ENCODE measurements at regions of chr3 and their contacts with region 1.

Region 1: GRCh38 chr3:187319699-187320302 is 28.3 kb upstream of the MASP1 start:
- DNase-seq: peak; percentile 57 to 74 (median 63)
- ATAC-seq: peak; percentile 68
- H3K4me3 ChIP-seq: no peak overlapping the region
- H3K27ac ChIP-seq: no peak overlapping the region
- H3K4me1 ChIP-seq: peaks cover 7% of the 10 kb centered on the region
- H3K27me3 ChIP-seq: no peaks in the 10 kb centered on the region
- CTCF ChIP-seq: peak; percentile 13 to 82 (median 64)
- POLR2A ChIP-seq: no peak

Region 2: GRCh38 chr3:187215460-187215859 is 104.3 kb before region 1 on chr3:
- intact Hi-C with region 1: loop called (anchors 5 kb)
- DNase-seq: no peak
- ATAC-seq: no peak
- H3K4me3 ChIP-seq: no peak overlapping the region
- H3K27ac ChIP-seq: no peak overlapping the region
- H3K4me1 ChIP-seq: peaks cover 8% of the 10 kb centered on the region
- H3K27me3 ChIP-seq: no peaks in the 10 kb centered on the region
- CTCF ChIP-seq: no peak
- POLR2A ChIP-seq: no peak

Region 3: GRCh38 chr3:187679638-187680396 is 360.0 kb after region 1 on chr3:
- intact Hi-C with region 1: loop called (anchors 5 kb)
- DNase-seq: peak; percentile 85 to 91 (median 88)
- ATAC-seq: peak; percentile 95
- H3K4me3 ChIP-seq: no peak overlapping the region
- H3K27ac ChIP-seq: no peak overlapping the region
- H3K4me1 ChIP-seq: peaks cover 8% of the 10 kb centered on the region
- H3K27me3 ChIP-seq: no peaks in the 10 kb centered on the region
- CTCF ChIP-seq: peak; percentile 75 to 99 (median 94)
- POLR2A ChIP-seq: no peak

Region 4: GRCh38 chr3:187714404-187714979 is 394.7 kb after region 1 on chr3:
- intact Hi-C with region 1: loop called (anchors 10 kb)
- DNase-seq: peak; percentile 80 to 85 (median 83)
- ATAC-seq: peak; percentile 94
- H3K4me3 ChIP-seq: no peak overlapping the region
- H3K27ac ChIP-seq: no peak overlapping the region
- H3K4me1 ChIP-seq: peaks cover 5% of the 10 kb centered on the region
- H3K27me3 ChIP-seq: no peaks in the 10 kb centered on the region
- CTCF ChIP-seq: peak; percentile 87 to 95 (median 94)
- POLR2A ChIP-seq: no peak